Activated naive CD4-positive, alpha-beta T cell treated with anti-CD3 and anti-CD28 coated beads for 36 hours (primary cell): ENCODE measurements at regions of chr13 and their contacts with region 1.

Region 1: DNA sequence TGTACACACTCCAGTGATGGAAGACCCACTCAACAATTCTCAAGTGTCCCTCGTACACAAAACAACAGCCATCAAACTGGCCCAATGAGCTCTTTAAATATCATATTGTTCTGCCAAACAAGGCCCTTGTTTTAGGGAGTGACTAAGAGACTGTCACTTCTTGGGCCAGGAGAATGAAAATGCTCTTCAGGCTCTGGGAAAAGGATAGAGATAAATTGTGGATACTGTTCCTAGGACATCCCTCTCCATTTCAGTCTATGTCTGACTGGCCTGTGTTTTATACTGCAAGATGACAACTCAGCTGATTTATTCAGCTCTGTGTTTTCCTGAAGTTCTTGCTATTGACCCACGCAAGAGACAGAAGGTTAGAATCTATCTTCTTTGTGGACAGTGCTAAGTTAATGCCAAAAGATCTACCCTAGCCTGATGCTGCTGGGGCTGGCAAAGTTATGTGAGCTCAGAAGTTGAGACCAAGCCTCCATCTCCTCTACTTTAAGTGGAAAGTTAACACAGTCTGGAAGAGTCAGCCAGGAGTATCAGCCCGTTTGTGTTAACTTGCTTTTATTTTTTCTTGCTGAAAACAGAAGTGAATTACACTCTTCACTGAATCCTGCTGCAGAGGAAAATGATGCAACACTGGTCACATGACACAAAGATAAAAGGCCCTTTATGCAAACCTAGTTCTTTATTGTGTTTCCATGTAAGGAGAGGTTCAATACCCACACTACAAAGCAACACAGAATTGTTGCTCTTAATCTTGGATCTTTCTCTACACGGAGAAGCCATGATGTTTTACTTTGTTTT is 14.6 kb downstream of the FRY start:
- DNase-seq: peak; percentile 61
- H3K4me3 Mint-ChIP-seq: peak overlapping the region; percentile 55
- H3K27ac Mint-ChIP-seq: peak overlapping the region; percentile 93
- H3K4me1 Mint-ChIP-seq: peaks cover 69% of the 10 kb centered on the region
- H3K27me3 Mint-ChIP-seq: no peaks in the 10 kb centered on the region

Region 2: DNA sequence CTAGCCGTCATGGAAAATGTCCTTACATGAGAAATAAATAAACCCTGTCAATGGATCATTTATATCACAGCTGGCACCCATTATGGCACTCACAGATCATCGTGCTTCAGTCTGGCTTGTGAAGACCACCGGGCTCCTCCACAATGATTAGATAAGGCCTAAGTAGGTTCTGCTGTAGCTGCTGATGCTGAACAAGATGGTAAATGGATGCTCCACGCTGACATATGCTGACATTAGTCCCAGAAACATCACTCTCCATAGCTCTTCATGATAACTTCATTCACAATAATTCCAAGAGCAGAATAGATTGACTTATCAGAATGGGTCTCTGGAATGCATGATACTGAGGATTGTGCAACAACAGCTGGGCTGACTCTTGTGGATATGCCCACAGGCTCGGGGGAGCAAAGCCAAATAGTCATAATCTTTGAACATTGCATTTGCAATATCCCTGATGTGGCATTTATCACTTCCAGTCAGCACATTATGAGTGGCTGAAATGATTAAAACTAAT is 370.7 kb before region 1 on chr13:
- CTCF ChIA-PET with region 1: no interaction called
- intact Hi-C with region 1: no loop called
- DNase-seq: no peak
- H3K4me3 Mint-ChIP-seq: no peak overlapping the region
- H3K27ac Mint-ChIP-seq: no peak overlapping the region
- H3K4me1 Mint-ChIP-seq: no peaks in the 10 kb centered on the region
- H3K27me3 Mint-ChIP-seq: no peaks in the 10 kb centered on the region

Region 3: GRCh38 chr13:31775686-31776085 is 270.5 kb before region 1 on chr13:
- CTCF ChIA-PET with region 1: no interaction called
- intact Hi-C with region 1: no loop called
- DNase-seq: no peak
- H3K4me3 Mint-ChIP-seq: no peak overlapping the region
- H3K27ac Mint-ChIP-seq: no peak overlapping the region
- H3K4me1 Mint-ChIP-seq: peaks cover 7% of the 10 kb centered on the region
- H3K27me3 Mint-ChIP-seq: peaks cover 7% of the 10 kb centered on the region

Region 4: GRCh38 chr13:32115066-32115465 is 68.9 kb after region 1 on chr13:
- CTCF ChIA-PET with region 1: no interaction called
- intact Hi-C with region 1: loop called (anchors 2 kb)
- DNase-seq: peak; percentile 7
- H3K4me3 Mint-ChIP-seq: no peak overlapping the region
- H3K27ac Mint-ChIP-seq: peak overlapping the region; percentile 39
- H3K4me1 Mint-ChIP-seq: peaks cover 20% of the 10 kb centered on the region
- H3K27me3 Mint-ChIP-seq: no peaks in the 10 kb centered on the region